HepG2 (cell line): ENCODE measurements at regions of chr19 and their contacts with region 1.

Region 1: DNA sequence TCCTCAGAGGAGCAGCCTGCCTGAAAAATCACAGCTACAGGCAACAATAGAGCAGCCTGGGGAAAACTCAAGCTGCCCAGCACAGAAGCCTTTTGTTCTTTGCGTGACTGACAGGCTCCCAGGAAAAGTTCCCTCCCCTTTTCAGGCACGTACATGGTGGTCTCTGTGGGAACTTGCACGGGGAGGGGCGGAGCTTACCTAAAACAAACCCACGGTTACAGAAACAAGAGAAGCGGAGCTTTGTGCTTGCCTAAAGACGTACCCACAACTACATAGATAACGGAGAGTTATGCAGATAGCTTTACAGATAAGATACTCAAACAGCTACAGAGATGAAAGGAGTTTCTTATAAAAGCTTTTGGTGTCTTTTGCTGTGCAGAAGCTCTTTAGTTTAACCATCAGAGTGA is 11.4 kb downstream of the ETFB start:
- DNase-seq: peak; percentile 99
- ATAC-seq: peak; percentile 76
- H3K4me3 ChIP-seq: peak overlapping the region; percentile 62 to 82 (median 72)
- H3K27ac ChIP-seq: peak overlapping the region; percentile 100
- H3K4me1 ChIP-seq: peaks cover 86% of the 10 kb centered on the region
- H3K27me3 ChIP-seq: no peaks in the 10 kb centered on the region; a peak in 1 of 5 replicates
- CTCF ChIP-seq: no peak
- EP300 ChIP-seq: peak; percentile 42 to 94; a peak in 3 of 4 replicates
- POLR2A ChIP-seq: no peak; a peak in 2 of 4 replicates
- RAD21 ChIP-seq: no peak

Region 2: DNA sequence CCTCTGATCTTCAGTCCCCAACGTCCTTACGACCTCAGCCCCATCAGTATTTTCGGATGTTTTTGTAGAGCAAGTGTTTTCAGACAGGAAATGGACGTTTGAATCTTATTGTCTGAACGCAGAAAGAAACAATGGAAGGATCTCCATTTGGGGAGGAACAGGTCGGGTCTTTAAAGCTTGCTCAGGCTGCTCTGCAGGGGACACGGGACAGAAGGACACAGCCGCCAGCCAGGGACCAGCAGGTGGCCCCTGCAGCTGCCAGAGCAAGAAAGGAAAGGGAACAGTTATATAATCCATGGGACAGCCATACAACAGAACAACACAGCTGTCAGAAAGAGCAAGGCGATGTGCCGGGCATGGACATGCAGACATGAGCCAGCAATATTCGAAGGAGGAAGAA is 61.8 kb before region 1 on chr19:
- CTCF ChIA-PET with region 1: no interaction called
- POLR2A ChIA-PET with region 1: no interaction called
- in situ Hi-C with region 1: no loop called
- intact Hi-C with region 1: no loop called
- DNase-seq: no peak
- ATAC-seq: 0 out of 3 replicates have a peak, but pooled peaks have one; percentile 18
- H3K4me3 ChIP-seq: no peak overlapping the region
- H3K27ac ChIP-seq: no peak overlapping the region
- H3K4me1 ChIP-seq: no peaks in the 10 kb centered on the region
- H3K27me3 ChIP-seq: peaks cover 5 to 50% of the 10 kb centered on the region in 2 experiments; a peak in 4 of 5 replicates
- CTCF ChIP-seq: 0 out of 2 replicates have a peak, but pooled peaks have one; percentile 12
- EP300 ChIP-seq: no peak
- POLR2A ChIP-seq: no peak
- RAD21 ChIP-seq: no peak

Region 3: GRCh38 chr19:51372649-51373504 is 18.1 kb after region 1 on chr19 and contains the start of gene NKG7:
- CTCF ChIA-PET with region 1: no interaction called
- POLR2A ChIA-PET with region 1: interaction called, 84 read pairs
- in situ Hi-C with region 1: no loop called
- intact Hi-C with region 1: no loop called
- DNase-seq: no peak
- ATAC-seq: no peak
- H3K4me3 ChIP-seq: no peak within 1 kb of the TSS
- H3K27ac ChIP-seq: no peak within 1 kb of the TSS
- H3K4me1 ChIP-seq: peaks cover 37% of the 10 kb centered on the region
- H3K27me3 ChIP-seq: peaks cover 0 to 14% of the 10 kb centered on the region in 2 experiments; a peak in 1 of 5 replicates
- CTCF ChIP-seq: no peak
- EP300 ChIP-seq: no peak
- POLR2A ChIP-seq: no peak
- RAD21 ChIP-seq: no peak
- total RNA-seq, gene NKG7: not detected in 2 replicates

Region 4: GRCh38 chr19:51393959-51394836 is 39.5 kb after region 1 on chr19:
- CTCF ChIA-PET with region 1: no interaction called
- POLR2A ChIA-PET with region 1: interaction called, 11 read pairs
- in situ Hi-C with region 1: no loop called
- intact Hi-C with region 1: no loop called
- DNase-seq: peak; percentile 99
- ATAC-seq: peak; percentile 98
- H3K4me3 ChIP-seq: peak overlapping the region; percentile 60 to 76 (median 66)
- H3K27ac ChIP-seq: peak overlapping the region; percentile 85
- H3K4me1 ChIP-seq: peaks cover 48% of the 10 kb centered on the region
- H3K27me3 ChIP-seq: no peaks in the 10 kb centered on the region
- CTCF ChIP-seq: no peak; the same call in 1 of the 2 replicates
- EP300 ChIP-seq: no peak
- POLR2A ChIP-seq: peak in 1 of 2 experiments; percentile 60; a peak in 2 of 4 replicates
- RAD21 ChIP-seq: no peak

Region 5: GRCh38 chr19:51417107-51417809 is 62.5 kb after region 1 on chr19 and contains the start of gene SIGLEC10:
- CTCF ChIA-PET with region 1: no interaction called
- POLR2A ChIA-PET with region 1: no interaction called
- in situ Hi-C with region 1: no loop called
- intact Hi-C with region 1: no loop called
- DNase-seq: no peak
- ATAC-seq: no peak
- H3K4me3 ChIP-seq: no peak within 1 kb of the TSS
- H3K27ac ChIP-seq: no peak within 1 kb of the TSS
- H3K4me1 ChIP-seq: no peaks in the 10 kb centered on the region
- H3K27me3 ChIP-seq: no peaks in the 10 kb centered on the region; a peak in 2 of 5 replicates
- CTCF ChIP-seq: no peak
- EP300 ChIP-seq: no peak
- POLR2A ChIP-seq: no peak
- RAD21 ChIP-seq: no peak
- total RNA-seq, gene SIGLEC10: not detected in 2 replicates